ENCODE measurements at regions of chr11 and their contacts with region 1.

Region 1: DNA sequence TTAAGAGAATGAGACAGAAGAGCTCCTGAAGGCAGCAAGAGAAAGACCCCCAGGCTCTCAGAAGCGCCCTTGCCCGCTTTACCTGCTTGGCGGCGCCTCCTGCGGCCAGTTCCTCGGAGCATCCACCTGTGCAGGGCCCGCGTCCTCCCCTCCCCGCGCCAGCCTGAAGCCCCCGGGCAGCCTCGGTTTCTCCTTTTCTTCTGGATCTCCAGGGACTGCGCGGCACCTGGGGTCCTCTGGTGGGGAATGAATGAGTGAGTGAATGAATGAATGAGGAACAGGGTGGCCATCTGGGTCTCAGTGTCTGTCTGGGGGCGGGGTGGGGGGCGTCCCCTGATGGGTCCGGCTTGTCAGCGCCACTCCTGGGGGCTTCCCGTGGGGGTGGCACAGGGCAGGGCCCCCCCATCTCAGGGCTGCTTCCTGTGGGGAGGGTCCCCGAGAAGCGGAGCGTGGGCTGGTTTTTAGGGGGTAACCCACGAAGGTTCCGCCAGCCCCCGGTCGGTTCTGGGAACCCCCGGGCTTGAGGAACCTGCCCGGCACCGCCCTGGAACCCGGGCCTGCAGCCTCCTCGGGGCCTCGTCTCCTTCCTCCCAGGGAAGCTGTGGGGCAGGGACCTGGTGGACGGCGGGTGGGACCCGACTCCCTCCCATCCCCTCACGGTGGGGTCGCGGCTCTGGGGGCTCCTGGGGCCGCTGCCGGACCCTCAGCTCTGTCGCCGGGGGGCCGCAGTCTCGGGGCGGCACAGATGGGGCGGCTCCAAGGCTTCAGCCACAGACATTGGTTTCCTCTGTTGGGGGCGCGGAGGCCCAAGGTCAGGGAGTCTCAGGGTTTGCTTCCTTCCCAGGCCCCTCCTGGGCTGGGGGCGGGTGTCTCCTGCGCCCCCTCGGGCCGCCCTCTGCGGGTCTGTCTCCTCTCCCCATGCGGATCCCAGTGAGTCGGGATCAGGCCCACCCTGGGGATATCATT is 8.3 kb upstream of the KRTAP5-7 start:
- DNase-seq: no peak
- ATAC-seq: no peak
- H3K4me3 ChIP-seq: no peak overlapping the region
- H3K27ac ChIP-seq: no peak overlapping the region
- H3K4me1 ChIP-seq: no peaks in the 10 kb centered on the region
- H3K27me3 ChIP-seq: peaks cover 3% of the 10 kb centered on the region; the same call in 1 of the 2 replicates
- CTCF ChIP-seq: no peak
- POLR2A ChIP-seq: no peak
- RAD21 ChIP-seq: no peak

Region 2: GRCh38 chr11:71338801-71339395 is 179.9 kb before region 1 on chr11:
- CTCF ChIA-PET with region 1: no interaction called
- POLR2A ChIA-PET with region 1: no interaction called
- dilution Hi-C with region 1: no loop called
- in situ Hi-C with region 1: no loop called
- intact Hi-C with region 1: no loop called
- DNase-seq: peak; percentile 73
- ATAC-seq: peak; percentile 77
- H3K4me3 ChIP-seq: no peak overlapping the region
- H3K27ac ChIP-seq: peak overlapping the region; percentile 86
- H3K4me1 ChIP-seq: peaks cover 30% of the 10 kb centered on the region
- H3K27me3 ChIP-seq: peaks cover 22% of the 10 kb centered on the region
- CTCF ChIP-seq: no peak
- POLR2A ChIP-seq: no peak
- RAD21 ChIP-seq: no peak

Region 3: DNA sequence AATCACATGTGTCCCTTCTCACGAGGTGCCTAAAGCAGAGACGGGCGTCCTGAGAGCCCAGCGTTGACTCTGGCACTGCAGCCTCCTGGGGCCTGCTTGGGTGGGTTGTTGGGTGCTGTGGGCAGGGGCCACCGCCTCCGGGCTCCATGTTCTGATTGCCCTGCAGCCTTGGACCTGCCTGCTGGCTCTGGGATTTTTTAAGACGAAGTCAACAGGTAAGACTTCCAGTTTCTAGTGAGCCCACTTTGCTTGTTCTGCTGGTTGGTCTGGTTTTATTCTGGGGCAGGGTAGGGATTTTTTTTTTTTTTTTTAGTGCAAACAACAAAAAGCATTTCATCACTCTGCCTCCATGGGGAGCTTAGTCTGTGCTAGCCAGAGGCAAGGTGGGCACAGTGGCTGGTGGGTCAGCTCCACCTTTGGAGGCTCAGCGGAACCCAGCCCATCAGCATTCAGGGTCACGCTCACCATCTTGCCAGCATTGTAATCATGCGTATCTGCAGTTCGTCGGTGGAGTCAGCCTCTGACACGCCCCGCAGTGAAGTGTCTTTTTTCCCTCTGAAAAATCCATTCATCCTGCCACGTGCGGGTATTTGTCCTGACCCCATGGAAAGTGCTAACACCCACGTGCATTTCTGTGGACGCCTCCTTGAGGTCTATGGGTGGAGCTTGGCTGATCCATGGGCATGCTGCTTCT is 37.5 kb before region 1 on chr11:
- CTCF ChIA-PET with region 1: no interaction called
- POLR2A ChIA-PET with region 1: no interaction called
- dilution Hi-C with region 1: no loop called
- in situ Hi-C with region 1: no loop called
- intact Hi-C with region 1: loop called (anchors 2 kb)
- DNase-seq: no peak
- ATAC-seq: no peak
- H3K4me3 ChIP-seq: no peak overlapping the region
- H3K27ac ChIP-seq: no peak overlapping the region
- H3K4me1 ChIP-seq: no peaks in the 10 kb centered on the region
- H3K27me3 ChIP-seq: no peaks in the 10 kb centered on the region
- CTCF ChIP-seq: no peak
- POLR2A ChIP-seq: no peak
- RAD21 ChIP-seq: no peak